ENCODE measurements at regions of chr4 and their contacts with region 1.

Region 1: DNA sequence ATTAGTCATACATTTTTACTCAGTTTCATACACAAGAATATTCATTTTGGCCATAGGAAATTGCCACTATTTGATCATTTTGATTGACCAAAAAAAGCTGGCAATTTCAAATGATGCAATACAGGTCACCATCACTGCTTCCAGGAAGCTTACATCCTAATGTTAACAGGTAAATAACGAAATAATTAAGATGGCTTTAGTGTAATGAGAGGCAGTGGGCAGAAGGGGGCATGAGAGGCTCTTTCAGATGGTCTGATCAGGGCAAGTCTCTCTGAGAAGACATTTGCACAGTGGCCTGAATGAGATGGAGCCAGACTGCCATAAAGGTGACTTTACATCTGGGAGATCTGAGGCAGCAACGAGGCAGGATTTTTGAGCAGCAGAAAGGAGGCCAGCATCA is 170.7 kb downstream of the SLIT2 start:
- DNase-seq: peak in 1 of 2 donors; percentile 5
- H3K4me3 ChIP-seq: no peak overlapping the region
- H3K27ac ChIP-seq: no peak overlapping the region
- H3K4me1 ChIP-seq: no peaks in the 10 kb centered on the region
- H3K27me3 ChIP-seq: no peaks in the 10 kb centered on the region
- CTCF ChIP-seq: peak in 4 of 6 experiments; percentile 6 to 41 (median 40)
- POLR2A ChIP-seq: no peak

Region 2: DNA sequence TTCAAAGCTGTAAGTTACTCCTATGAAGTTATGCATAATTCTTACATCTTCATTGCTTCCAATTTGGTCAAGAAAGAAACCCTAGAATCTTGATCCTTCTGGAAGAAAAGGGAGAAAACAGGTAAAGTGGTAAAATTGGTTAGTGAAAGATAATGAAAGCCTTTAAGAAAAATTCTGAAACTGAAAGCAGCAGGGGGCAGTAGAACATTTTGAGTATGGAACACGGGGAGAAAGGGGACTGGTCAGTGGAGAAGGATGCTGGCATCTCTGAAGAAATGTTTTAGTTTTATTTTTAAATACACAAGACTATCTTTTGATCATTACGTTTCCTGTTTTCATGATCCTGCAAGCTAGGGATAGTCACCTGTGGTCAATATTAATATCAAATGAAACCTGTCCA is 116.4 kb before region 1 on chr4:
- intact Hi-C with region 1: loop called (anchors 10 kb)
- DNase-seq: no peak
- H3K4me3 ChIP-seq: no peak overlapping the region
- H3K27ac ChIP-seq: no peak overlapping the region
- H3K4me1 ChIP-seq: no peaks in the 10 kb centered on the region
- H3K27me3 ChIP-seq: no peaks in the 10 kb centered on the region
- CTCF ChIP-seq: peak in 3 of 6 experiments; percentile 11 to 22 (median 15)
- POLR2A ChIP-seq: no peak

Region 3: DNA sequence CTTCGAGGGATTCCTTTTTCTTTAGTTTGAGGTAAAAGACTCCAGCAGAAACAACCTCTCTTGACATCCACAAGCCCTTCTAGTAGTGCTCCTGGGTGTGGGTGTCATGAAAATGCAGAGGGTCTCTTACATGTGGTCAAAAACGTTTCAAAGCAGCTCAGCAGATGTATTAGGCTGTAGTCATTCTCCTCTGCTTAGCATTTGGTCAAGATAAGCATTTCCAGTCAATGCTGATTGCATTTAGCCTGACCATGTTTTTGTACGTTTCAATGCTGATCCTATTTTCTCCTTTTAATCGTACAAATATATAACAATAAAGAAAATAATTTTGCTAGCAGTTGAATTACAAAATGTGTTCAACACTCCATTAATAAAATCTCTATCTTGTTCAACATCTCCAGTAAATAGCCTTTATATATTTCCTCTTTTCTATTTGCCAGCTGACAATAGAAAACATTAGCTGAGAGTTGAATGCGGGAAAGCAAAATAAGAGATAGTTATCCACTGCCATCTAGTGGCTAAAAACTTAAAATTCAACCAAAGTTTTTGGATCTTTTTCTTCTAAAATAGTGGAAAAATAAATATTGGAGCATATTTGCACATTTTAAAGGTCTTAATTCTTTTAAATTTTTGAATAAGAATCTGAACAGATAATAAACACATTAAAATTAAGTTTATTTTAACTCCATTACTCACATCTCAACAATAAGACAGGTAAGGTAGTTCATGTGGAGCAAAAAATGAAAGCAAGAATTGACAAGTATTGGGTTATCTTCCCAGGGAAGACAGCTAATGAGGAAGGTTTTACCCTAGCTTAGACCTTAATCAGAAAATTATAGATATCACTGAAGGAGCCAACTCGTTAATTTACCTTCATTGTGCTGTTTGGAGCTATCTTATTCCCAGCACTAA is 262.7 kb after region 1 on chr4:
- intact Hi-C with region 1: loop called (anchors 10 kb)
- DNase-seq: no peak
- H3K4me3 ChIP-seq: no peak overlapping the region
- H3K27ac ChIP-seq: no peak overlapping the region
- H3K4me1 ChIP-seq: no peaks in the 10 kb centered on the region
- H3K27me3 ChIP-seq: no peaks in the 10 kb centered on the region
- CTCF ChIP-seq: peak in 4 of 6 experiments; percentile 34 to 69 (median 52)
- POLR2A ChIP-seq: no peak